Astrocyte of the cerebellum (primary cell): ENCODE measurements at regions of chr21 and their contacts with region 1.

Region 1: GRCh38 chr21:33641336-33642026 is at the start of gene CRYZL1:
- DNase-seq: peak; percentile 99
- H3K4me3 ChIP-seq: peak within 1 kb of the TSS; percentile 89
- CTCF ChIP-seq: no peak

Region 2: DNA sequence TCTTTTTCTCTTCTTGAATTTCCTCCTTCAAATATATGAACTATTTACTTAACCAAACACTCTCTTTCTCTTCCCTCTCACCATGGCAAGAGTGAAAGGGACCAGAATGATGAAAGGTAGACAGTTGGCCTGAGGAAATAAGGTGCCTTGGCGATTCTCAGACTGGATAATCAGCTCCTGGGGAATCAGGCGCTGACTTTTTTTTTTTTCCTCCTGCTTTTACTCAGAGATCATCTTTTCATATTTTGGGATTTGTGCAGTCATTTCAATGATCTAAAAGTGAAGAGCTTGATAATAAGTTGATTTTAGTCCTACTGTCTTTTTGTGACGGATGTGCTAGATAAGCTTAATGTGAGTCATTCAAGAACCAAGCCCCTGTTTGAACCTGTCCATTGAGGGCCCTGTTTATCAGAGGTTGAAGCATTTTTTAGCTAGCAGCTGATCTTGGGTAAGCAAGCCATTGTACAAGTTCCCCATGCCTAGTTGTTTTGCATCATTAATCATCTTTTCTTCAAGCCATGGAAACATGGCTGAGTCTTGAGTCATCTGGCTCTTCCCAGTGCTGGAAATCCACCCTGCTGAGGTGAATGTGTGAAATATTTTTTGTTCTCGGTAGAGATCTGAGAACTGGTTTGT is 41.6 kb after region 1 on chr21:
- in situ Hi-C with region 1: loop called (anchors 5 kb)
- DNase-seq: peak; percentile 91
- H3K4me3 ChIP-seq: no peak overlapping the region
- CTCF ChIP-seq: no peak

Region 3: DNA sequence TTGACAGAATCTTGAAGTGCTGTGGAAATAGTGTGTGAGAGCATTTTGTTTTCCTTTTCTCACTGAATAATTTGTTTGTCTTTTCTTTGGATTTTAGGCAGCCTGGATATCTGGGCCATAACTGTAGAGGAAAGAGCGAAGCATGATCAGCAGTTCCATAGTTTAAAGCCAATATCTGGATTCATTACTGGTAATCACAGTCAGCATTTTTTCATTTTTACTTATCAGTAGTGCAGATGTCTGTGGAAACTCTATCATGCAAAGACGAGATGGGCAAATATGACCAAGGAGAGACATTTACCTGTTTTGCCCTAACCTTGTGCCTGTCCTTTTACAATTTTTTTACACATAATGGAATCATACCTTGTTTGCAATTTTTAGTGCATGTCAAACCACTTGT is 79.6 kb after region 1 on chr21:
- in situ Hi-C with region 1: loop called (anchors 5 kb)
- DNase-seq: no peak
- H3K4me3 ChIP-seq: no peak overlapping the region
- CTCF ChIP-seq: no peak

Region 4: GRCh38 chr21:33731447-33731846 is 90.0 kb after region 1 on chr21:
- in situ Hi-C with region 1: no loop called
- DNase-seq: no peak
- H3K4me3 ChIP-seq: no peak overlapping the region
- CTCF ChIP-seq: no peak

Region 5: GRCh38 chr21:33901412-33902288 is 260.2 kb after region 1 on chr21:
- in situ Hi-C with region 1: loop called (anchors 5 kb)
- DNase-seq: peak; percentile 57
- H3K4me3 ChIP-seq: no peak overlapping the region
- CTCF ChIP-seq: peak; percentile 78